ENCODE measurements at regions of chr1 and their contacts with region 1.

Region 1: GRCh38 chr1:92299477-92300150 is 755 bp downstream of the RPAP2 start:
- DNase-seq: no peak
- ATAC-seq: no peak

Region 2: GRCh38 chr1:92367496-92367895 is 67.9 kb after region 1 on chr1:
- intact Hi-C with region 1: no loop called
- DNase-seq: no peak
- ATAC-seq: no peak

Region 3: GRCh38 chr1:92623187-92623778 is 323.7 kb after region 1 on chr1:
- intact Hi-C with region 1: loop called (anchors 10 kb)
- DNase-seq: no peak
- ATAC-seq: no peak